ENCODE measurements at regions of chr2 and their contacts with region 1.

Region 1: GRCh38 chr2:13006829-13007717 is 290.3 kb downstream of the TRIB2 start:
- DNase-seq: peak; percentile 73
- H3K4me3 ChIP-seq: peak overlapping the region; percentile 14 to 39; a peak in 2 of 4 replicates
- H3K27ac ChIP-seq: peak overlapping the region; percentile 3 to 64; a peak in 3 of 4 replicates
- H3K4me1 ChIP-seq: peaks cover 25 to 32% of the 10 kb centered on the region in 2 experiments
- H3K27me3 ChIP-seq: no peaks in the 10 kb centered on the region
- CTCF ChIP-seq: peak; percentile 94
- EP300 ChIP-seq: peak; percentile 16 to 94; a peak in 2 of 4 replicates
- RAD21 ChIP-seq: peak; percentile 100

Region 2: DNA sequence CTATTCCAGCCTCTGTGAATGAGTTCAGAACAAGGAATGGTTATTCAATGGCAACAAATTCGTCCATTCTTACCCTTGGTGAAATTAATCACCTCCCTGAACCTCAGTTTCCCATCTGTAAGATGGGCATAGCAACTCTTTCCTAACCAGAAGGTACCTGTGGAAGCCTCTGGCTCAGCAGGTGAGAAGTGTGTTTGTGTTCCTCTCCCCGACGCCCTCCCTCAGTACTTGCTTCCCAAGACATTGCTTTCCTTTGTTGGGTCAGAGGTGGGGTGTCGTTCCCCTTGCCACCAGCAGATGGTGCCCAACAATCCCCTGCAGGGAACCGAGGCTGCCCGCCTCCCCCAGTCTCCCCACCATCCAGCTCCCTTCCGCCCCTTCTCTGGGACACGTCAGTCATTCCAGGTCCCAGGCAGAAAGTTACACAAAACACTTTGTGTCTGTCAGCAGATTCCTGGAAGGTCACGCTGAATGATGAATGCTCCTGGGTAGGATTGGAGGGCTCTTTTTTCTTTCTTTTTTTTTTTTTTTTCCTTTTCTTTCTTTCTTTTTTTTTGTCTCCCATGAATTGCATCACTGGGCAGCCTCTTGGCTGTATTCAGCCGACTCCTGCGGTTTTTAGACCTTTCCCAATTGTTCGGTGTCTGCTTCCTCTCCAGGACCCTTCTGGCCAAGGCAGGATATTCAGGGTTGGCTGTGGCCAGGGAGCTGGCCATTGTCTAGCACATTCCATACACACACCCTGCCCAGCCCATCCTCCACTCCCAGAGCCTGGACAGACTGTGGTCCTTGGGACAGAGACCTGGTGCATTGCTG is 1143.4 kb before region 1 on chr2:
- CTCF ChIA-PET with region 1: interaction called, 54 read pairs
- POLR2A ChIA-PET with region 1: no interaction called
- DNase-seq: peak; percentile 92
- H3K4me3 ChIP-seq: peak overlapping the region in 1 of 2 experiments; percentile 14; a peak in 1 of 4 replicates
- H3K27ac ChIP-seq: peak overlapping the region; percentile 7 to 25; a peak in 1 of 4 replicates
- H3K4me1 ChIP-seq: peaks cover 5 to 6% of the 10 kb centered on the region in 2 experiments; a peak in 3 of 4 replicates
- H3K27me3 ChIP-seq: no peaks in the 10 kb centered on the region
- CTCF ChIP-seq: peak; percentile 99
- EP300 ChIP-seq: peak in 1 of 2 experiments; percentile 13; a peak in 1 of 4 replicates
- RAD21 ChIP-seq: peak; percentile 91

Region 3: GRCh38 chr2:12716282-12717190 is 290.5 kb before region 1 on chr2 and contains the start of gene TRIB2:
- CTCF ChIA-PET with region 1: interaction called, 152 read pairs
- POLR2A ChIA-PET with region 1: interaction called, 22 read pairs
- DNase-seq: peak; percentile 98
- H3K4me3 ChIP-seq: peak within 1 kb of the TSS; percentile 93 to 98
- H3K27ac ChIP-seq: peak within 1 kb of the TSS; percentile 92 to 93
- H3K4me1 ChIP-seq: peaks cover 28 to 34% of the 10 kb centered on the region in 2 experiments
- H3K27me3 ChIP-seq: no peaks in the 10 kb centered on the region
- CTCF ChIP-seq: 0 out of 2 replicates have a peak, but pooled peaks have one; percentile 19
- EP300 ChIP-seq: no peak; a peak in 2 of 4 replicates
- RAD21 ChIP-seq: peak; percentile 53
- polyA plus RNA-seq, gene TRIB2: 21.0 and 27.5 TPM in 2 replicates

Region 4: GRCh38 chr2:12754643-12755042 is 252.4 kb before region 1 on chr2:
- CTCF ChIA-PET with region 1: interaction called, 10 read pairs
- POLR2A ChIA-PET with region 1: no interaction called
- DNase-seq: no peak
- H3K4me3 ChIP-seq: no peak overlapping the region
- H3K27ac ChIP-seq: no peak overlapping the region
- H3K4me1 ChIP-seq: peaks cover 8 to 12% of the 10 kb centered on the region in 2 experiments
- H3K27me3 ChIP-seq: no peaks in the 10 kb centered on the region
- CTCF ChIP-seq: no peak
- EP300 ChIP-seq: no peak
- RAD21 ChIP-seq: no peak

Region 5: DNA sequence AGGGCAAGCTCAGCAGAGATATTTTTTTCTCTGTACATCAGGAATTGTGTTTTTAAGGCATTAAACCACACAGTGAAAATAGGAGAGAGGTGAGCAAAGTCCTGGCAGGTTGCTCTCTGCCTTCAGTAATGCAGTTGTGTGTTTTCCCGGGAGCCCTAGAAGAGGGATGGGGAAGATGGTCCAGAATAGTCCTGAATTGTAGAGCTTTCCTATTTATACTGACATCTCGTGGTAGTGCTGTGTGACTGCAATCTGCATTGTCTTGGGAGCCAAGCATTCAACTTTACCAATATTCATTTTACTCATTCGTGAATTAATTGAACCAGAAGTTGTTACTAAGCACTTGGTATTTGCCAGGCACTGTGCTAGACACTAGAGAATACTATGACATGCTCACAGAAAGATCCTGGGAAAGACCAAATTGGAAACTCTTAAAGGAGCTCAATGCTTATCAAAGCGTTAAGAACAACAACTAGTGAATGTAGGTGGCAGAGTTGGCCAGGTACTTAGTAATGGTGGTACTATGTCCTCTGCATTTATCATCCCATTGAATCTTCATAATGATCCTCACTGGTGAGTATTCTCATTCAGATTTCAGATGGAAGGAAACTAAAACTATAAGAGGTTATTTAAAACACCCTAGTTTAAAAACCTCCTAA is 75.8 kb before region 1 on chr2:
- CTCF ChIA-PET with region 1: interaction called, 153 read pairs
- POLR2A ChIA-PET with region 1: no interaction called
- DNase-seq: peak; percentile 75
- H3K4me3 ChIP-seq: no peak overlapping the region
- H3K27ac ChIP-seq: peak overlapping the region in 1 of 2 experiments; percentile 86; a peak in 2 of 4 replicates
- H3K4me1 ChIP-seq: peaks cover 26 to 35% of the 10 kb centered on the region in 2 experiments; a peak in 3 of 4 replicates
- H3K27me3 ChIP-seq: no peaks in the 10 kb centered on the region
- CTCF ChIP-seq: peak; percentile 99
- EP300 ChIP-seq: no peak
- RAD21 ChIP-seq: peak; percentile 89

Region 6: GRCh38 chr2:12990523-12990922 is 16.6 kb before region 1 on chr2:
- CTCF ChIA-PET with region 1: interaction called, 38 read pairs
- POLR2A ChIA-PET with region 1: no interaction called
- DNase-seq: no peak
- H3K4me3 ChIP-seq: no peak overlapping the region
- H3K27ac ChIP-seq: no peak overlapping the region
- H3K4me1 ChIP-seq: no peaks in the 10 kb centered on the region; a peak in 1 of 4 replicates
- H3K27me3 ChIP-seq: no peaks in the 10 kb centered on the region
- CTCF ChIP-seq: peak; percentile 63
- EP300 ChIP-seq: no peak
- RAD21 ChIP-seq: peak; percentile 43; the same call in 1 of the 2 replicates

Measured in SK-N-SH (cell line).